ENCODE measurements at regions of chr9 and their contacts with region 1.

Region 1: GRCh38 chr9:21585756-21586752 is 103.9 kb upstream of the IFNE start:
- DNase-seq: no peak
- ATAC-seq: no peak

Region 2: GRCh38 chr9:21653091-21653490 is 67.0 kb after region 1 on chr9:
- intact Hi-C with region 1: loop called in 1 of 2 experiments (anchors 10 kb)
- DNase-seq: no peak
- ATAC-seq: no peak

Measured in left cardiac atrium (tissue), 4 donors.